ENCODE measurements at regions of chr11 and their contacts with region 1.

Region 1: DNA sequence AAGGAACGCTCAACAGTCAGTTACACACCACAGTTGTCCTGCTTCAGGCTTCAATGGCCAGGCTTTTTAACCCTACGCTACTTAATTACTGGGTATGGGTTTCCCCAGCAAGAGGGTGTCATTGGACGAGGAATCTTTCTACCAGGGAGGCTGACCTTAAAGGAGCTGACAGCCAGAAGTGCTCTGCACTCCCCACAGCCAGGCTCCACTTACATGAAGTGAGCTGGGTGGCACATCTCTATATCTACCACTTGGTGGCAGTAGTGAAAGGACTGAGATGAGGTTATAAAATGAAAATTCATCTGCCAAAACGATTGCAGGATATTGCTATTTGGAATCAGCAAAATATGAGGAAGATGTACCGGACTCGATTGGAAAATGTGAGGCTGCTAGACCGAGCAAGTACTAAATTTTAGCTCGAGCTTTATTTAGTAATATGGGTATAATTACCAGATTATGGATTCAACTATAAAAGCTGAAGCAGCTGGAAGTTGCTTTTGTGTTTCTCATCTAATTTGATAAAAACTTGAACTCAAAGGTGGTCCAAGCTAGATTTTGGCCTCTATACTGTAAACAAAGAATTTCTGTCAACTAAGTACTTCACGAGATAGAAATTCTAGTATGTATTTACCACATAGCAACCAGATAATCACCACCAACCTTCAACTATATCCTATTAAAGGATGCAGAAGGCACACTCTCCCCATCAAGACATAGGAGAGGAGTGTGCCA is 53.9 kb upstream of the CEP126 start:
- DNase-seq: peak in 1 of 2 donors; percentile 18
- ATAC-seq: peak in 1 of 2 donors; percentile 80
- H3K4me3 ChIP-seq: no peak overlapping the region
- H3K27ac ChIP-seq: no peak overlapping the region
- H3K4me1 ChIP-seq: no peaks in the 10 kb centered on the region
- H3K27me3 ChIP-seq: no peaks in the 10 kb centered on the region
- CTCF ChIP-seq: peak; percentile 36 to 73 (median 45)
- POLR2A ChIP-seq: no peak

Region 2: GRCh38 chr11:101931692-101932091 is 70.8 kb after region 1 on chr11:
- in situ Hi-C with region 1: no loop called
- intact Hi-C with region 1: no loop called
- DNase-seq: no peak
- ATAC-seq: no peak
- H3K4me3 ChIP-seq: no peak overlapping the region
- H3K27ac ChIP-seq: no peak overlapping the region
- H3K4me1 ChIP-seq: no peaks in the 10 kb centered on the region
- H3K27me3 ChIP-seq: no peaks in the 10 kb centered on the region
- CTCF ChIP-seq: no peak
- POLR2A ChIP-seq: no peak

Region 3: GRCh38 chr11:102007567-102008437 is 146.9 kb after region 1 on chr11:
- in situ Hi-C with region 1: loop called (anchors 10 to 25 kb)
- intact Hi-C with region 1: loop called (anchors 1 kb)
- DNase-seq: no peak
- ATAC-seq: peak; percentile 59 to 82
- H3K4me3 ChIP-seq: no peak overlapping the region
- H3K27ac ChIP-seq: peak overlapping the region in 1 of 4 donors; percentile 23
- H3K4me1 ChIP-seq: peaks cover 3 to 4% of the 10 kb centered on the region in 2 donors
- H3K27me3 ChIP-seq: no peaks in the 10 kb centered on the region
- CTCF ChIP-seq: peak; percentile 29 to 61 (median 54)
- POLR2A ChIP-seq: no peak

Region 4: DNA sequence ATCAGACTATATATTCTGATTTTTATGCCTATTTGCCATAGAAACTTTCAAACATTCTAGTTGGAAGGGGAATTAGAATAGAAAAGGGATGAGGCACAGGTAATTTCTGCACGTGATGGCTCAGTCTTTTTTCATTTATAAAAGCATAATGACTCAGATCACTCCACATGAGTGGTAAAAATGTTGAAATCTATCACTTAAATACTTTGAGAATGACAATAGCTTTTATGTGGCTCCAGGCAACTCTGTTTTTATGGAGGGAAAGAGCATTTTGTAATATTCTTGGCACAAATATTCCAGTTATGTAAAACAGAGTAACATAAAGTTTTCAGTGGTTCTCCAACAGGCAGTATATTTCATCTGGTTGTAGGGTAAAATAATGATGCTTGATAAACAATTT is 988.5 kb after region 1 on chr11:
- in situ Hi-C with region 1: no loop called
- intact Hi-C with region 1: no loop called
- DNase-seq: no peak
- ATAC-seq: no peak
- H3K4me3 ChIP-seq: no peak overlapping the region
- H3K27ac ChIP-seq: no peak overlapping the region
- H3K4me1 ChIP-seq: no peaks in the 10 kb centered on the region
- H3K27me3 ChIP-seq: no peaks in the 10 kb centered on the region
- CTCF ChIP-seq: no peak
- POLR2A ChIP-seq: no peak

Measured in gastrocnemius medialis (tissue), 4 donors.